Activated B cell treated with CpG ODN at 0.5 μM for 24 hours (primary cell): ENCODE measurements at regions of chr1 and their contacts with region 1.

Region 1: GRCh38 chr1:89820422-89821321 is at the start of gene LRRC8D:
- DNase-seq: peak; percentile 67
- ATAC-seq: peak; percentile 66
- H3K4me3 Mint-ChIP-seq: peak within 1 kb of the TSS; percentile 95
- H3K27ac Mint-ChIP-seq: peak within 1 kb of the TSS; percentile 96
- H3K4me1 Mint-ChIP-seq: peaks cover 48% of the 10 kb centered on the region
- H3K27me3 Mint-ChIP-seq: no peaks in the 10 kb centered on the region
- CTCF ChIP-seq: no peak
- total RNA-seq, gene LRRC8D: 31.3 and 36.0 TPM in 2 replicates

Region 2: GRCh38 chr1:89719502-89720306 is 101.0 kb before region 1 on chr1:
- CTCF ChIA-PET with region 1: no interaction called
- POLR2A ChIA-PET with region 1: interaction called, 5 read pairs
- intact Hi-C with region 1: loop called (anchors 2 kb)
- DNase-seq: no peak
- ATAC-seq: peak; percentile 92
- H3K4me3 Mint-ChIP-seq: peak overlapping the region; percentile 72
- H3K27ac Mint-ChIP-seq: peak overlapping the region; percentile 96
- H3K4me1 Mint-ChIP-seq: peaks cover 56% of the 10 kb centered on the region
- H3K27me3 Mint-ChIP-seq: no peaks in the 10 kb centered on the region
- CTCF ChIP-seq: no peak

Region 3: GRCh38 chr1:89833183-89834082 is 12.8 kb after region 1 on chr1:
- CTCF ChIA-PET with region 1: interaction called, 3 read pairs
- POLR2A ChIA-PET with region 1: interaction called, 18 read pairs
- intact Hi-C with region 1: no loop called
- DNase-seq: no peak
- ATAC-seq: no peak
- H3K4me3 Mint-ChIP-seq: no peak overlapping the region
- H3K27ac Mint-ChIP-seq: no peak overlapping the region
- H3K4me1 Mint-ChIP-seq: peaks cover 32% of the 10 kb centered on the region
- H3K27me3 Mint-ChIP-seq: no peaks in the 10 kb centered on the region
- CTCF ChIP-seq: no peak

Region 4: GRCh38 chr1:89855413-89856123 is 34.9 kb after region 1 on chr1:
- CTCF ChIA-PET with region 1: no interaction called
- POLR2A ChIA-PET with region 1: interaction called, 4 read pairs
- intact Hi-C with region 1: loop called (anchors 1 kb)
- DNase-seq: no peak
- ATAC-seq: peak; percentile 89
- H3K4me3 Mint-ChIP-seq: peak overlapping the region; percentile 61
- H3K27ac Mint-ChIP-seq: no peak overlapping the region
- H3K4me1 Mint-ChIP-seq: peaks cover 2% of the 10 kb centered on the region
- H3K27me3 Mint-ChIP-seq: no peaks in the 10 kb centered on the region
- CTCF ChIP-seq: no peak

Region 5: GRCh38 chr1:89994805-89995597 is 174.3 kb after region 1 on chr1 and contains the start of gene ZNF326:
- CTCF ChIA-PET with region 1: interaction called, 3 read pairs
- POLR2A ChIA-PET with region 1: interaction called, 10 read pairs
- intact Hi-C with region 1: loop called (anchors 1 kb)
- DNase-seq: peak; percentile 98
- ATAC-seq: peak; percentile 97
- H3K4me3 Mint-ChIP-seq: peak within 1 kb of the TSS; percentile 94
- H3K27ac Mint-ChIP-seq: peak within 1 kb of the TSS; percentile 88
- H3K4me1 Mint-ChIP-seq: peaks cover 32% of the 10 kb centered on the region
- H3K27me3 Mint-ChIP-seq: no peaks in the 10 kb centered on the region
- CTCF ChIP-seq: no peak
- total RNA-seq, gene ZNF326: 26.2 and 30.3 TPM in 2 replicates